SK-N-SH (cell line): ENCODE measurements at regions of chr15 and their contacts with region 1.

Region 1: GRCh38 chr15:69058830-69059556 is 44.5 kb downstream of the NOX5 start:
- DNase-seq: peak; percentile 82
- H3K4me3 ChIP-seq: peak overlapping the region in 1 of 2 experiments; percentile 34; a peak in 1 of 4 replicates
- H3K27ac ChIP-seq: peak overlapping the region in 1 of 2 experiments; percentile 87; a peak in 2 of 4 replicates
- H3K4me1 ChIP-seq: peaks cover 4 to 26% of the 10 kb centered on the region in 2 experiments; a peak in 3 of 4 replicates
- H3K27me3 ChIP-seq: no peaks in the 10 kb centered on the region; the same call in 1 of the 2 replicates
- CTCF ChIP-seq: peak; percentile 92
- EP300 ChIP-seq: no peak
- RAD21 ChIP-seq: peak; percentile 96

Region 2: GRCh38 chr15:68979036-68979435 is 80.0 kb before region 1 on chr15:
- CTCF ChIA-PET with region 1: no interaction called
- POLR2A ChIA-PET with region 1: no interaction called
- DNase-seq: no peak
- H3K4me3 ChIP-seq: no peak overlapping the region
- H3K27ac ChIP-seq: no peak overlapping the region
- H3K4me1 ChIP-seq: no peaks in the 10 kb centered on the region; a peak in 1 of 4 replicates
- H3K27me3 ChIP-seq: no peaks in the 10 kb centered on the region
- CTCF ChIP-seq: no peak
- EP300 ChIP-seq: no peak
- RAD21 ChIP-seq: no peak

Region 3: DNA sequence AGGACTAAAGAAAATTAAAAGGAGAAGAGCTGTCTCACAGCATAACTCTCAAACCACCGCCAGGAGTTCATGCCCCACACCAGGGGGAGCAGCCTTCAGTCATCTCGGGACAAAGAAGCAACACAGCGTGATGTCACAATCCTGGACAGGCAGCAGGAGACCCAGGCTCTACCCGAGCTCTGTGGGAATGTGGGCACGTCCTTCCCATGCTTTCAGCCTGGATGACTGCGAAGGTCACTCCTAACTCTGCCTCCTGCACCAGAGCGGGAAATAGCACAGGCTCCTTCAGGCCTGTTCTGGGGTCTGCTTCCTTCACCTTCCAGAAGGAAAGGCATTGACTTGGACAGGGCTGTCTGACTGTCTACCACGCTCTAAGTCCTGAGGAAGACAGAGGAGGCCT is 13.2 kb before region 1 on chr15:
- CTCF ChIA-PET with region 1: interaction called, 32 read pairs
- POLR2A ChIA-PET with region 1: no interaction called
- DNase-seq: no peak
- H3K4me3 ChIP-seq: no peak overlapping the region
- H3K27ac ChIP-seq: peak overlapping the region in 1 of 2 experiments; percentile 58; a peak in 2 of 4 replicates
- H3K4me1 ChIP-seq: peaks cover 6 to 9% of the 10 kb centered on the region in 2 experiments; a peak in 3 of 4 replicates
- H3K27me3 ChIP-seq: no peaks in the 10 kb centered on the region
- CTCF ChIP-seq: no peak
- EP300 ChIP-seq: no peak
- RAD21 ChIP-seq: no peak

Region 4: GRCh38 chr15:69117431-69117871 is 58.5 kb after region 1 on chr15:
- CTCF ChIA-PET with region 1: interaction called, 20 read pairs
- POLR2A ChIA-PET with region 1: no interaction called
- DNase-seq: peak; percentile 28
- H3K4me3 ChIP-seq: no peak overlapping the region
- H3K27ac ChIP-seq: no peak overlapping the region
- H3K4me1 ChIP-seq: peaks cover 0 to 32% of the 10 kb centered on the region in 2 experiments; a peak in 2 of 4 replicates
- H3K27me3 ChIP-seq: peaks cover 44% of the 10 kb centered on the region
- CTCF ChIP-seq: no peak
- EP300 ChIP-seq: no peak
- RAD21 ChIP-seq: no peak

Region 5: GRCh38 chr15:69160141-69160993 is 101.4 kb after region 1 on chr15 and contains the start of gene GLCE:
- CTCF ChIA-PET with region 1: interaction called, 24 read pairs
- POLR2A ChIA-PET with region 1: no interaction called
- DNase-seq: peak; percentile 98
- H3K4me3 ChIP-seq: peak within 1 kb of the TSS; percentile 82 to 94
- H3K27ac ChIP-seq: peak within 1 kb of the TSS; percentile 71 to 92
- H3K4me1 ChIP-seq: peaks cover 7 to 20% of the 10 kb centered on the region in 2 experiments
- H3K27me3 ChIP-seq: no peaks in the 10 kb centered on the region
- CTCF ChIP-seq: no peak
- EP300 ChIP-seq: no peak
- RAD21 ChIP-seq: 0 out of 2 replicates have a peak, but pooled peaks have one; percentile 5
- polyA plus RNA-seq, gene GLCE: 19.5 and 25.0 TPM in 2 replicates

Region 6: GRCh38 chr15:69394556-69395282 is 335.7 kb after region 1 on chr15:
- CTCF ChIA-PET with region 1: interaction called, 96 read pairs
- POLR2A ChIA-PET with region 1: no interaction called
- DNase-seq: peak; percentile 93
- H3K4me3 ChIP-seq: peak overlapping the region in 1 of 2 experiments; percentile 14; a peak in 1 of 4 replicates
- H3K27ac ChIP-seq: no peak overlapping the region
- H3K4me1 ChIP-seq: peaks cover 5 to 8% of the 10 kb centered on the region in 2 experiments; a peak in 2 of 4 replicates
- H3K27me3 ChIP-seq: no peaks in the 10 kb centered on the region
- CTCF ChIP-seq: peak; percentile 91
- EP300 ChIP-seq: no peak
- RAD21 ChIP-seq: peak; percentile 86

Region 7: DNA sequence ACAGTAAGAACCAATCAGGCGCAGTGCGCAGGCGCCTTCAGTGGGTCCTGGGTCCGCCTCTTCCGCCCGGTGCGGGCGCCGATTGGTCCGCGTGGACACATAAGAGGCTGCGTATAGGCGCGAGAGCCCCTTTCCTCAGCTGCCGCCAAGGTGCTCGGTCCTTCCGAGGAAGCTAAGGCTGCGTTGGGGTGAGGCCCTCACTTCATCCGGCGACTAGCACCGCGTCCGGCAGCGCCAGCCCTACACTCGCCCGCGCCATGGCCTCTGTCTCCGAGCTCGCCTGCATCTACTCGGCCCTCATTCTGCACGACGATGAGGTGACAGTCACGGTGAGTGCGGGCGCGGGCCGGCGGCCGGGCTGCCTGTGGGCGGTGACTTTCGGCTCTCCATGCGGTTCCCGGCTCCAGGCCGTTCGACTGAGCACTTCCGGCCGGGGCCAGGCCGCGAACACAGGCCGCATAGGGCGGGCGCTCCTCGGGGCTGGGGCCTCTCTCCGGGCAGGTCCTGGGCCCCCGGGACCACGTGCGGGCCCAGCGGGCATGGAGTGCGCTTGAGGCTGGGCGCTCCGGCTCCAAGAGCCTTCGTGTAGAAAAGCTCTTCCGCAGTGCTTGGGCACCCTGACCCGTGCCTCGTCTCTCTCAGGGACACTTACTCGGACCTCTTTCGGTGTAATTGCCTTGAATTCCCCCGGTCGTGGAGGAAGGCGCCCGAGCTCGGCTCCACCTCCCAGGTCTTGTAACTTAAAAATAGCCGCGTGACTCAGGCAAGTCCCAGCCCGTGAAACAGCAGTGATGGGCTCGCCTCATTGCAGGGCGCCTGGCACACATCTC is 393.9 kb after region 1 on chr15 and contains the start of gene RPLP1:
- CTCF ChIA-PET with region 1: interaction called, 12 read pairs
- POLR2A ChIA-PET with region 1: no interaction called
- DNase-seq: peak; percentile 97
- H3K4me3 ChIP-seq: peak within 1 kb of the TSS; percentile 88 to 91
- H3K27ac ChIP-seq: peak within 1 kb of the TSS; percentile 94 to 95
- H3K4me1 ChIP-seq: peaks cover 10 to 16% of the 10 kb centered on the region in 2 experiments; a peak in 3 of 4 replicates
- H3K27me3 ChIP-seq: no peaks in the 10 kb centered on the region
- CTCF ChIP-seq: no peak
- EP300 ChIP-seq: no peak
- RAD21 ChIP-seq: no peak
- polyA plus RNA-seq, gene RPLP1: 1,514 and 1,792 TPM in 2 replicates